ENCODE measurements at regions of chr17 and their contacts with region 1.

Region 1: GRCh38 chr17:20992987-20993862 is 49.6 kb downstream of the USP22 start:
- DNase-seq: peak; percentile 81 to 96
- ATAC-seq: peak; percentile 27 to 61; a peak in 3 of 6 replicates
- H3K4me3 ChIP-seq: no peak overlapping the region
- H3K27ac ChIP-seq: no peak overlapping the region
- H3K4me1 ChIP-seq: 0 out of 3 replicates have a peak, but pooled peaks cover 4% of the 10 kb centered on the region
- CTCF ChIP-seq: peak; percentile 94
- EP300 ChIP-seq: no peak
- POLR2A ChIP-seq: no peak
- RAD21 ChIP-seq: peak; percentile 80 to 83

Region 2: GRCh38 chr17:20896153-20896649 is 97.0 kb before region 1 on chr17:
- CTCF ChIA-PET with region 1: interaction called, 10 read pairs
- POLR2A ChIA-PET with region 1: no interaction called
- DNase-seq: peak in 1 of 2 experiments; percentile 13
- ATAC-seq: peak; percentile 52 to 65; a peak in 4 of 6 replicates
- H3K4me3 ChIP-seq: no peak overlapping the region
- H3K27ac ChIP-seq: no peak overlapping the region
- H3K4me1 ChIP-seq: no peaks in the 10 kb centered on the region
- CTCF ChIP-seq: no peak
- EP300 ChIP-seq: no peak
- POLR2A ChIP-seq: no peak
- RAD21 ChIP-seq: peak in 1 of 2 experiments; percentile 41; a peak in 3 of 5 replicates

Region 3: GRCh38 chr17:20955427-20956323 is 37.5 kb before region 1 on chr17:
- CTCF ChIA-PET with region 1: interaction called, 11 read pairs
- POLR2A ChIA-PET with region 1: no interaction called
- DNase-seq: no peak
- ATAC-seq: no peak
- H3K4me3 ChIP-seq: no peak overlapping the region
- H3K27ac ChIP-seq: no peak overlapping the region
- H3K4me1 ChIP-seq: peaks cover 7% of the 10 kb centered on the region; the same call in 1 of the 3 replicates
- CTCF ChIP-seq: no peak
- EP300 ChIP-seq: no peak
- POLR2A ChIP-seq: no peak
- RAD21 ChIP-seq: no peak

Region 4: DNA sequence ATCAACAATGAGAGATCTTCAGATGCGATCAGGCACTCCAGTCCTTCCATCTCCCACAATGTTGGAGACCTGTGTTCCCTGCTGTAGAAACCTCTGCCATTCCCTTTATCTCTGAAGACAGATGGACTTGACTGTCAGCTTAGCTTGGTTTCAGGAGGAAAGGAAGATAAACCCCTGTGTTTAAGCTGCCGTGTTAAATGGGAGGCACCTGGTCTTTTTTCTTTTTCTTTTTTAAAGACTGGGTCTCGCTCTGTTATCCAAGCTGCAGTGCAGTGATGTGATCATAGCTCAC is 13.5 kb before region 1 on chr17:
- CTCF ChIA-PET with region 1: interaction called, 11 read pairs
- POLR2A ChIA-PET with region 1: no interaction called
- DNase-seq: no peak
- ATAC-seq: no peak
- H3K4me3 ChIP-seq: no peak overlapping the region
- H3K27ac ChIP-seq: no peak overlapping the region
- H3K4me1 ChIP-seq: no peaks in the 10 kb centered on the region
- CTCF ChIP-seq: no peak
- EP300 ChIP-seq: no peak
- POLR2A ChIP-seq: no peak
- RAD21 ChIP-seq: no peak

Region 5: GRCh38 chr17:21119247-21119918 is 126.2 kb after region 1 on chr17:
- CTCF ChIA-PET with region 1: no interaction called
- POLR2A ChIA-PET with region 1: no interaction called
- DNase-seq: peak; percentile 82 to 86
- ATAC-seq: peak; percentile 86 to 92
- H3K4me3 ChIP-seq: peak overlapping the region; percentile 23; the same call in 1 of the 3 replicates
- H3K27ac ChIP-seq: no peak overlapping the region
- H3K4me1 ChIP-seq: no peaks in the 10 kb centered on the region
- CTCF ChIP-seq: peak; percentile 95
- EP300 ChIP-seq: no peak
- POLR2A ChIP-seq: no peak
- RAD21 ChIP-seq: peak; percentile 78 to 88

Measured in A549 (cell line).